IMR-90 (cell line): ENCODE measurements at regions of chr6 and their contacts with region 1.

Region 1: DNA sequence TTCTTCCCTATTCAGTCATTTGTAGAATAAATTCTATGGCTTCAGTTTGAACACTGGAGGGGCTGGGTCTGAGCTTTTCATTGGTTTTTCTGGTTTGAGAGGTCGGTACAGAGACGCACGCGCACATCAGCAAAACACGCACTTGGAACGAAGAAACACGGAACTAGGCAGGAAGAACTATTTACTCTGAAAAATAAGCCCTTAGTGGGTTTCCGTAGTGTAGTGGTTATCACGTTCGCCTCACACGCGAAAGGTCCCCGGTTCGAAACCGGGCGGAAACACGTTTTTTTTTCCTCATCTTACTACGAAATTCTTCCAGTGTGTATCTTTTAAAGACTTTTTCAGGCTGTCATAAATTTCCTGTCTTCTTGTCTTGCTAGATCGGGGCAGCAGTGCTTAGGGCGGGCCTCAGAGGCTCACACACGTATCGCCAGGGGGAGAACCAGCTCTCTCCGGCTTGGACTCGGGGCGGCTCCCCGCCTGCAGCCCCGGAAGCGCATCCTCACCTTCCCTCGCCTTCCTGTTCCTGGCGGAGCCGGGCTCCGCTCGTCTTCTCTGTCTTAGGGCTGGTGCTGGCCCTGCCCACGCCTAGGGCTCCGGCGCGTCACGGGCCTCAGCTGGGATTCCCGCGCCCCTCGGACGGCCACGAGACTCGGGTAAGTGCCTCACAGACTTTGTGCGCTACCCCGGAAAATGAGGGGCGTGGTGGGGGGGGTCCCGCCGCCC is at the start of gene HMGN4:
- DNase-seq: peak; percentile 90
- ATAC-seq: peak; percentile 72
- H3K4me3 ChIP-seq: peak within 1 kb of the TSS; percentile 62
- H3K27ac ChIP-seq: peak within 1 kb of the TSS; percentile 91
- H3K4me1 ChIP-seq: peaks cover 2% of the 10 kb centered on the region; the same call in 1 of the 2 replicates
- H3K27me3 ChIP-seq: no peaks in the 10 kb centered on the region
- CTCF ChIP-seq: 0 out of 2 replicates have a peak, but pooled peaks have one; percentile 1
- POLR2A ChIP-seq: peak; percentile 74
- RAD21 ChIP-seq: peak; percentile 6; the same call in 1 of the 2 replicates
- total RNA-seq, gene HMGN4: 49.2 and 50.2 TPM in 2 replicates

Region 2: GRCh38 chr6:26457806-26458688 is 80.0 kb before region 1 on chr6 and contains the start of gene BTN2A1:
- CTCF ChIA-PET with region 1: no interaction called
- POLR2A ChIA-PET with region 1: no interaction called
- dilution Hi-C with region 1: no loop called
- in situ Hi-C with region 1: no loop called
- intact Hi-C with region 1: loop called (anchors 5 kb)
- DNase-seq: peak; percentile 95
- ATAC-seq: peak; percentile 98
- H3K4me3 ChIP-seq: peak within 1 kb of the TSS; percentile 75
- H3K27ac ChIP-seq: peak within 1 kb of the TSS; percentile 98
- H3K4me1 ChIP-seq: peaks cover 13% of the 10 kb centered on the region
- H3K27me3 ChIP-seq: no peaks in the 10 kb centered on the region
- CTCF ChIP-seq: no peak
- POLR2A ChIP-seq: peak; percentile 54; the same call in 1 of the 2 replicates
- RAD21 ChIP-seq: no peak
- total RNA-seq, gene BTN2A1: 11.4 and 13.6 TPM in 2 replicates

Region 3: GRCh38 chr6:26520853-26521599 is 17.0 kb before region 1 on chr6:
- CTCF ChIA-PET with region 1: no interaction called
- POLR2A ChIA-PET with region 1: no interaction called
- dilution Hi-C with region 1: no loop called
- in situ Hi-C with region 1: no loop called
- intact Hi-C with region 1: loop called (anchors 1 kb)
- DNase-seq: peak; percentile 80
- ATAC-seq: peak; percentile 78
- H3K4me3 ChIP-seq: peak overlapping the region; percentile 60
- H3K27ac ChIP-seq: peak overlapping the region; percentile 91
- H3K4me1 ChIP-seq: peaks cover 5% of the 10 kb centered on the region; the same call in 1 of the 2 replicates
- H3K27me3 ChIP-seq: no peaks in the 10 kb centered on the region
- CTCF ChIP-seq: no peak
- POLR2A ChIP-seq: peak; percentile 73
- RAD21 ChIP-seq: no peak

Region 4: GRCh38 chr6:26553635-26554446 is 15.8 kb after region 1 on chr6:
- CTCF ChIA-PET with region 1: no interaction called
- POLR2A ChIA-PET with region 1: no interaction called
- dilution Hi-C with region 1: no loop called
- in situ Hi-C with region 1: no loop called
- intact Hi-C with region 1: loop called (anchors 1 kb)
- DNase-seq: peak; percentile 92
- ATAC-seq: peak; percentile 50
- H3K4me3 ChIP-seq: peak overlapping the region; percentile 58
- H3K27ac ChIP-seq: no peak overlapping the region
- H3K4me1 ChIP-seq: no peaks in the 10 kb centered on the region
- H3K27me3 ChIP-seq: no peaks in the 10 kb centered on the region
- CTCF ChIP-seq: no peak
- POLR2A ChIP-seq: no peak
- RAD21 ChIP-seq: no peak

Region 5: GRCh38 chr6:26651133-26651781 is 113.2 kb after region 1 on chr6:
- CTCF ChIA-PET with region 1: no interaction called
- POLR2A ChIA-PET with region 1: no interaction called
- dilution Hi-C with region 1: no loop called
- in situ Hi-C with region 1: no loop called
- intact Hi-C with region 1: no loop called
- DNase-seq: no peak
- ATAC-seq: no peak
- H3K4me3 ChIP-seq: no peak overlapping the region
- H3K27ac ChIP-seq: no peak overlapping the region
- H3K4me1 ChIP-seq: no peaks in the 10 kb centered on the region
- H3K27me3 ChIP-seq: no peaks in the 10 kb centered on the region
- CTCF ChIP-seq: no peak
- POLR2A ChIP-seq: no peak
- RAD21 ChIP-seq: no peak

Region 6: DNA sequence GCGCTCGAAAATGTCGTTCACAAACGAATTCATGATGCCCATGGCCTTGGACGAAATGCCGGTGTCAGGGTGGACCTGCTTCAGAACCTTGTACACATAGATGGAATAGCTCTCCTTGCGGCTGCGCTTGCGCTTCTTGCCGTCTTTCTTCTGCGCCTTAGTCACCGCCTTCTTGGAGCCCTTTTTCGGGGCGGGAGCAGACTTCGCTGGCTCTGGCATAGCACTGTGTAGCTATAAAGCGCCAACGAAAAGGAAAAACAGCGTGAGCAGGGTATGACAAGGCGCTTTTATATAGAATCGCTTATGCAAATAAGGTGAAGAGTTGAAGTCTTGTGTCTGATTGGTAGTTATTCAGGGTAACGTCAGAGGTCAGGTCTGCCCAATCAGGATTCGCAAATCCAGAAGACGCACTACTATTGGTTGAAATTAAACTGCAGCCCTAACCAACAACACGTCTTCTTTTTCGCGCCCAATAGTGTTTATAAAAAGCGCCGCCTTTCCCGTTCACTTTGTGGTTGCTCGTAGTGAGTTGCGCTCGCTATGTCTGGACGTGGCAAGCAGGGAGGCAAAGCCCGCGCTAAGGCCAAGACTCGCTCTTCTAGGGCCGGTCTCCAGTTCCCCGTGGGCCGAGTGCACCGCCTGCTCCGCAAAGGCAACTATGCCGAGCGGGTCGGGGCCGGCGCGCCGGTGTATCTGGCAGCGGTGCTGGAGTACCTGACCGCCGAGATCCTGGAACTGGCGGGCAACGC is 594.7 kb after region 1 on chr6:
- CTCF ChIA-PET with region 1: no interaction called
- POLR2A ChIA-PET with region 1: interaction called, 21 read pairs
- dilution Hi-C with region 1: no loop called
- in situ Hi-C with region 1: no loop called
- intact Hi-C with region 1: no loop called
- DNase-seq: peak; percentile 100
- ATAC-seq: peak; percentile 89
- H3K4me3 ChIP-seq: peak overlapping the region; percentile 50
- H3K27ac ChIP-seq: peak overlapping the region; percentile 79
- H3K4me1 ChIP-seq: no peaks in the 10 kb centered on the region
- H3K27me3 ChIP-seq: no peaks in the 10 kb centered on the region
- CTCF ChIP-seq: no peak
- POLR2A ChIP-seq: peak; percentile 99
- RAD21 ChIP-seq: no peak